Activated naive CD8-positive, alpha-beta T cell treated with anti-CD3 and anti-CD28 coated beads, Interleukin-2, amount 10 ng/mL, durations not matched to agents 7 days and 5 days (primary cell): ENCODE measurements at regions of chr15 and their contacts with region 1.

Region 1: DNA sequence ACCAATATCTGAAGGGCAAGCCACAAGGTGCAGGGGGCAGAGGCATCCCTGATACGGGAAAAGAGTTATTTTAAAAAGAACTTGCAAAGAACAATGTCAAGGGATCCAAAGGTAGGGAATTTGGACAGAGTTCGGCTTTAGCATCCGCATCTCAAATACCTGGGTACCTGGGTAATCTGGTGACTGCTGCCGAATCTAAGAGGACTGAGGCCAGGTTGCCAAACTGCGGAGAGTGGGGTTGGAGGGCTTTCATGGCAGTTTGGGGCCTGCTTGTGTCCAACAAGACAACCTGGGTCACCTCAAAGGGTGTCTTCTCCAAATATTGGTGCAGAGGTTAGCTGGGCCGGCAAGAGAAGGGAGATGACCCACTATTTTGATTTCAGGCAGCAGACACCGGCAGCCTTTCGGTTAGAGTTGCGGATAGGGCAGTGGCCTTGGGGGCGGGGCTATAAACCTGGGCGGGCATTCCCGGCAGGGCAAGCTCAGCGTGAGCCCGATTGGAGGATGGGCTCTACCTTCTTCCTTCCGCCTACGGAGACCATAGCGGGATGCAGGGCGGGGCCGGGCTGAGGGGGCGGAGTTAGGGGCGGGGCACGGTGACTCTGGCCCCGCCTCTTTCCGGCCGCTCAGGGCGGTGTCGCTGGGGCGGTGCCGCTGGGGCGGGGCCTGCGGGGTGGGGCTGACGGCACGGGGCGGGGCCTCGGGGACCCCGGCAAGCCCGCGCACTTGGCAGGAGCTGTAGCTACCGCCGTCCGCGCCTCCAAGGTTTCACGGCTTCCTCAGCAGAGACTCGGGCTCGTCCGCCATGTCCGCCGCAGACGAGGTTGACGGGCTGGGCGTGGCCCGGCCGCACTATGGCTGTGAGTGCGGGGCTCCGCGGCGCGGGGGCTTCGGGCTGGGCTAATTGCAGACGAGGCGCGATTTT is at the start of gene IQGAP1:
- DNase-seq: peak; percentile 96
- ATAC-seq: peak; percentile 90
- H3K4me3 Mint-ChIP-seq: peak within 1 kb of the TSS; percentile 94
- H3K27ac Mint-ChIP-seq: peak within 1 kb of the TSS; percentile 99
- H3K4me1 Mint-ChIP-seq: peaks cover 30% of the 10 kb centered on the region
- H3K27me3 Mint-ChIP-seq: no peaks in the 10 kb centered on the region
- total RNA-seq, gene IQGAP1: 211 to 220 TPM

Region 2: DNA sequence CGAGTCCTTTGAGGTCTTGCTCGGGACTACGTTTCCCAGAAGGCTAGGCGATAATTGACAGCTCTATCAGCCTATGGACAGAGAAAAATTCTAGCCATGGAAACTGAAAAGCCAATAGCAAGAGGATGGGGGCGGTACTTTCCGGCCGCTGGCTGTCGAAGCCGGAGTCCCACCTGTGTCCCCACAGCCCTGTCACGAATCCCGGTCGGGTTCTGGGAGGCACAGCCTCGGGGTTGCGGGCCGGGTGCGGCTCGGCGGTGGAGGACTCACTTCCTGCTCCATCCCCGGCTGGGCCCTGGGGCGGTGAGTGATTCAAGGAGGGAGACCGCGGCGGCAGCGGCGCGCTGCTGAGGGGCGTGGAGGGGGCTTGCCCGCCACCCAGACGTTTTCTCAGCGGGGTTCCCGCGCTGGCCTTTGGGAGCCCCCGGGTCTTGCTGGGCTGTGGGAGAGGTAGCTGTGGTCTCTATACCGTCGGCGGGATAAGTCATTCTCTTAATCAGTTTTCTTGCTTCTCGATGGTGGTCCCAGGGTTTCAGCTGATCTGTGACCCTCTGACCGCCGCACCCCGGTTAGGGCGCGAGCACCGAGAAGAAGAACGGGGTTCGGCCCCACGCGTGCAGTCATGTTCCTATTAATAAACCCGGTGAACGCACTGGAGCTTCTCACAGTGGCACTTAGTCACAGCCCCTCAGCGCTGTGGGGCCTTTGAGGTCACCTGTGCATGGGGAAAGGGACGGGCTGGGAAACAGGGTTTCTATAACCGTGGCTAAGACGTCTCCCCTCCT is 35.5 kb before region 1 on chr15 and contains the start of gene ZNF774:
- POLR2A ChIA-PET with region 1: interaction called, 11 read pairs
- DNase-seq: peak; percentile 89
- ATAC-seq: peak; percentile 99
- H3K4me3 Mint-ChIP-seq: peak within 1 kb of the TSS; percentile 88
- H3K27ac Mint-ChIP-seq: peak within 1 kb of the TSS; percentile 78
- H3K4me1 Mint-ChIP-seq: peaks cover 14% of the 10 kb centered on the region
- H3K27me3 Mint-ChIP-seq: no peaks in the 10 kb centered on the region
- total RNA-seq, gene ZNF774: 1.6 to 2.4 TPM

Region 3: GRCh38 chr15:90362936-90363212 is 24.9 kb before region 1 on chr15:
- POLR2A ChIA-PET with region 1: interaction called, 68 read pairs
- DNase-seq: no peak
- ATAC-seq: no peak
- H3K4me3 Mint-ChIP-seq: no peak overlapping the region
- H3K27ac Mint-ChIP-seq: no peak overlapping the region
- H3K4me1 Mint-ChIP-seq: peaks cover 32% of the 10 kb centered on the region
- H3K27me3 Mint-ChIP-seq: no peaks in the 10 kb centered on the region

Region 4: DNA sequence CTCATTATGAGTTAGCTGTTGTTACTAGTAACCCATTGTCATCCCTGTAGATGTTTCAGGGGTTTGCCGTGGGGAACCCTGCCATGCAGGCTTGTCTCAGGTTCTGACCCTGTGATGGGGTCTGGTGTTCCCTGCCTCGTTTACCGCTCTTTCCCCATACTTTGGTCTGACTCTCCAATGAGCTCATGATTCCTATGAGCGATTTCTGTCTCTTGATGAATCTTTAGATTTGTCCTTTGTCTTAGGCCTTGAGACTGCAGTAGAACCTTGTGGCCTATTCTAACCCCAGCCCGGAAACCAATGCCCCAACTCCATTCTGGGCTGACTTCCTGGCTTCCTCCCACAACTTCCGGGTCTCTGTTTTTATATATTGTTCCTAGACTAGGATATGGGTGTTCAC is 11.0 kb before region 1 on chr15:
- POLR2A ChIA-PET with region 1: interaction called, 93 read pairs
- DNase-seq: peak; percentile 71
- ATAC-seq: peak; percentile 94
- H3K4me3 Mint-ChIP-seq: peak overlapping the region; percentile 64
- H3K27ac Mint-ChIP-seq: peak overlapping the region; percentile 93
- H3K4me1 Mint-ChIP-seq: peaks cover 29% of the 10 kb centered on the region
- H3K27me3 Mint-ChIP-seq: no peaks in the 10 kb centered on the region

Region 5: GRCh38 chr15:90400406-90401314 is 12.9 kb after region 1 on chr15:
- POLR2A ChIA-PET with region 1: interaction called, 46 read pairs
- DNase-seq: no peak
- ATAC-seq: peak; percentile 97
- H3K4me3 Mint-ChIP-seq: peak overlapping the region; percentile 69
- H3K27ac Mint-ChIP-seq: peak overlapping the region; percentile 88
- H3K4me1 Mint-ChIP-seq: peaks cover 58% of the 10 kb centered on the region
- H3K27me3 Mint-ChIP-seq: no peaks in the 10 kb centered on the region

Region 6: DNA sequence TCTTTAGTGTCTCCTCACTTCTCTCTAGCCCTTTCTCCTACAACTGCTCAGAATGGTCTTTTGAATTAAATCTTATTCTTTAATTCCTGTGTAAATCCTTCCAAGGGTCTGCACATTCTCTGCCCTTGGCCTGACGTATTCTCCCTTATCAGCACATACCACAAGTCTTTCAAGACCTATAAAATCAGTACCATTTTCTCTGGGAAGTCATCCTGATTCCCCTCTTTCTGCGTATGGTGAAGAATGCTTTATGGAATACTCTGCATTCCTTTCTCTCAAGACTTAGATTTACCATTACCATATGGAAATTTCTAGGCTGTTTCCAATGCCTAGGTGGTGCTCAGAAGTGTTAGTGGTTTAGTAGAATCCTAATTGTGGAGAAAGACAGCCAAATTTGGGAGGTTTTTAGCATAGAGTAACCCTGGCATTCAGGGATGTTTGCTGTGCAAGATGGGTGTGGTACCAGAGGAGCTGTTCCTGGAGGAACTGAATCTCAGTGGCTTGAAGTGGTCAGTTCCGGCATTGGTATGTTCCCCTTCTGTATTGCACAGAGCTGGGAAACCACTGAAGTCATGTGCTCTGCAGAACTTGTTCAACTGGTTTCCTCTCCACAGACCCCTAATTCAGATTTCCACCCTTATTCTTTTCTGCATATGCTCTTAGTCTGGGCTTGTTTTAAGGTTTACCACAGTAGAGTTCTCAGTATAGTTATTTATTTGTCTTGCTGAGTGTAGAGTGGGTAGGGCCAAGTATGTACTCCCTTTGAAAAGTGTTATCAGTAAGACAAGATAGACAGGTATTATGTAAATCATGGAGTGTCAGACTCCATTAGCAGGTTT is 24.8 kb after region 1 on chr15:
- POLR2A ChIA-PET with region 1: interaction called, 24 read pairs
- DNase-seq: no peak
- ATAC-seq: peak; percentile 62
- H3K4me3 Mint-ChIP-seq: peak overlapping the region; percentile 50
- H3K27ac Mint-ChIP-seq: peak overlapping the region; percentile 57
- H3K4me1 Mint-ChIP-seq: peaks cover 56% of the 10 kb centered on the region
- H3K27me3 Mint-ChIP-seq: no peaks in the 10 kb centered on the region

Region 7: DNA sequence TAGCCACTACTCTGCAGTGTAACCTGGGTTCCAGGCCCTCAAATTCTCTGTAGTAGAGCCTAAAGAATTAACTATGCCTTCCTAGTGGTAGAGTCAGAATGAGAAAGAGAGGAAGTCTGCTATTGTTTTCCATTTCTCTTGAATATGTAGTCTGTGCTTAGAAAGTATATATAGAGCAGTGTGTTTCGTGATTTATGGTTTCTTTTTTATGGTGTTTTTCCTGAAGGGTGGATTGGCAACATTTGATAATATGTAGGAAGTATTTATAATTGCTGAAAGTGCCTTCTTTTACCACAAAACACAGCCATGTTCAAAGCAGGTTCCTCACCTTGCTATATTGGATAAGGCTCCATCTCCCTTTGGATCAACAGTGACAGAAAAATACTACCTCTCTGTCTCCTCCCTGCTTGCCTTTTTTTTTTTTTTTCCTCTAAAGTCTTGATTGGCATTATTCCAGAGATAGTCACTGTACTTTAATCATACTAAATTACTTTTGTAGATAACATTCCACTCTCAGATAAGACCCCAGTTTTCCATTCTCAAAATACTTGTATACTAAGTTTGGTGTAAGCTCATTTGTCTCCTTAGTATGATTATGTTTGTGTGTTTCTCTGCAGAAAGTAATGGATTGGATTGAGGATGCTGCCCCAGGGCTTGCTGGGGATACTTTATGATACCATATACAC is 48.0 kb after region 1 on chr15:
- POLR2A ChIA-PET with region 1: no interaction called
- DNase-seq: no peak
- ATAC-seq: no peak
- H3K4me3 Mint-ChIP-seq: no peak overlapping the region
- H3K27ac Mint-ChIP-seq: no peak overlapping the region
- H3K4me1 Mint-ChIP-seq: peaks cover 11% of the 10 kb centered on the region
- H3K27me3 Mint-ChIP-seq: no peaks in the 10 kb centered on the region

Region 8: GRCh38 chr15:90481023-90481422 is 93.2 kb after region 1 on chr15:
- POLR2A ChIA-PET with region 1: interaction called, 15 read pairs
- DNase-seq: peak; percentile 65
- ATAC-seq: peak; percentile 89
- H3K4me3 Mint-ChIP-seq: peak overlapping the region; percentile 8
- H3K27ac Mint-ChIP-seq: peak overlapping the region; percentile 30
- H3K4me1 Mint-ChIP-seq: peaks cover 40% of the 10 kb centered on the region
- H3K27me3 Mint-ChIP-seq: no peaks in the 10 kb centered on the region